ENCODE measurements at regions of chr4 and their contacts with region 1.

Region 1: GRCh38 chr4:108109997-108110416 is 58.7 kb downstream of the LEF1 start:
- DNase-seq: no peak
- ATAC-seq: no peak
- H3K4me3 ChIP-seq: peak overlapping the region in 1 of 2 experiments; percentile 7
- H3K4me3 Mint-ChIP-seq: peak overlapping the region; percentile 61
- H3K27ac ChIP-seq: peak overlapping the region; percentile 6 to 19
- H3K27ac Mint-ChIP-seq: peak overlapping the region; percentile 98
- H3K4me1 ChIP-seq: peaks cover 98% of the 10 kb centered on the region
- H3K4me1 Mint-ChIP-seq: peaks cover 86% of the 10 kb centered on the region
- H3K27me3 ChIP-seq: no peaks in the 10 kb centered on the region
- H3K27me3 Mint-ChIP-seq: no peaks in the 10 kb centered on the region
- CTCF ChIP-seq: no peak

Region 2: GRCh38 chr4:108072300-108072699 is 37.7 kb before region 1 on chr4:
- CTCF ChIA-PET with region 1: interaction called, 5 read pairs
- POLR2A ChIA-PET with region 1: interaction called, 4 read pairs
- intact Hi-C with region 1: loop called (anchors 5 kb)
- DNase-seq: peak; percentile 37 to 93 (median 77)
- ATAC-seq: peak; percentile 87
- H3K4me3 ChIP-seq: peak overlapping the region in 1 of 2 experiments; percentile 20
- H3K4me3 Mint-ChIP-seq: peak overlapping the region; percentile 60
- H3K27ac ChIP-seq: peak overlapping the region; percentile 67 to 76
- H3K27ac Mint-ChIP-seq: peak overlapping the region; percentile 97
- H3K4me1 ChIP-seq: peaks cover 58% of the 10 kb centered on the region
- H3K4me1 Mint-ChIP-seq: peaks cover 74% of the 10 kb centered on the region
- H3K27me3 ChIP-seq: no peaks in the 10 kb centered on the region
- H3K27me3 Mint-ChIP-seq: no peaks in the 10 kb centered on the region
- CTCF ChIP-seq: no peak

Region 3: GRCh38 chr4:108094923-108095482 is 15.0 kb before region 1 on chr4:
- CTCF ChIA-PET with region 1: interaction called, 16 read pairs
- POLR2A ChIA-PET with region 1: interaction called, 20 read pairs
- intact Hi-C with region 1: loop called in 1 of 2 experiments (anchors 1 kb)
- DNase-seq: peak in 2 of 9 experiments; percentile 25 to 56
- ATAC-seq: peak; percentile 47
- H3K4me3 ChIP-seq: no peak overlapping the region
- H3K4me3 Mint-ChIP-seq: peak overlapping the region; percentile 50
- H3K27ac ChIP-seq: peak overlapping the region in 1 of 2 experiments; percentile 7
- H3K27ac Mint-ChIP-seq: peak overlapping the region; percentile 96
- H3K4me1 ChIP-seq: peaks cover 86% of the 10 kb centered on the region
- H3K4me1 Mint-ChIP-seq: peaks cover 83% of the 10 kb centered on the region
- H3K27me3 ChIP-seq: no peaks in the 10 kb centered on the region
- H3K27me3 Mint-ChIP-seq: no peaks in the 10 kb centered on the region
- CTCF ChIP-seq: peak; percentile 35

Region 4: GRCh38 chr4:108141213-108141950 is 31.4 kb after region 1 on chr4:
- CTCF ChIA-PET with region 1: interaction called, 4 read pairs
- POLR2A ChIA-PET with region 1: interaction called, 19 read pairs
- intact Hi-C with region 1: loop called (anchors 2 kb)
- DNase-seq: peak in 3 of 9 experiments; percentile 33 to 45 (median 38)
- ATAC-seq: peak; percentile 6
- H3K4me3 ChIP-seq: peak overlapping the region in 1 of 2 experiments; percentile 10
- H3K4me3 Mint-ChIP-seq: peak overlapping the region; percentile 73
- H3K27ac ChIP-seq: peak overlapping the region; percentile 7 to 9
- H3K27ac Mint-ChIP-seq: peak overlapping the region; percentile 94
- H3K4me1 ChIP-seq: peaks cover 99% of the 10 kb centered on the region
- H3K4me1 Mint-ChIP-seq: peaks cover 90% of the 10 kb centered on the region
- H3K27me3 ChIP-seq: no peaks in the 10 kb centered on the region
- H3K27me3 Mint-ChIP-seq: no peaks in the 10 kb centered on the region
- CTCF ChIP-seq: no peak

Region 5: GRCh38 chr4:108166441-108167315 is 56.7 kb after region 1 on chr4:
- CTCF ChIA-PET with region 1: no interaction called
- POLR2A ChIA-PET with region 1: interaction called, 34 read pairs
- intact Hi-C with region 1: loop called (anchors 2 to 5 kb)
- DNase-seq: peak; percentile 16 to 78 (median 58)
- ATAC-seq: peak; percentile 15
- H3K4me3 ChIP-seq: peak overlapping the region; percentile 73 to 78
- H3K4me3 Mint-ChIP-seq: peak overlapping the region; percentile 95
- H3K27ac ChIP-seq: peak overlapping the region; percentile 42 to 59
- H3K27ac Mint-ChIP-seq: peak overlapping the region; percentile 97
- H3K4me1 ChIP-seq: peaks cover 22% of the 10 kb centered on the region
- H3K4me1 Mint-ChIP-seq: peaks cover 47% of the 10 kb centered on the region
- H3K27me3 ChIP-seq: peaks cover 0 to 32% of the 10 kb centered on the region in 2 experiments
- H3K27me3 Mint-ChIP-seq: peaks cover 3% of the 10 kb centered on the region
- CTCF ChIP-seq: no peak

Region 6: GRCh38 chr4:108255203-108255747 is 145.3 kb after region 1 on chr4:
- CTCF ChIA-PET with region 1: no interaction called
- POLR2A ChIA-PET with region 1: no interaction called
- intact Hi-C with region 1: no loop called
- DNase-seq: no peak
- ATAC-seq: no peak
- H3K4me3 ChIP-seq: no peak overlapping the region
- H3K4me3 Mint-ChIP-seq: no peak overlapping the region
- H3K27ac ChIP-seq: no peak overlapping the region
- H3K27ac Mint-ChIP-seq: no peak overlapping the region
- H3K4me1 ChIP-seq: no peaks in the 10 kb centered on the region
- H3K4me1 Mint-ChIP-seq: peaks cover 9% of the 10 kb centered on the region
- H3K27me3 ChIP-seq: no peaks in the 10 kb centered on the region
- H3K27me3 Mint-ChIP-seq: no peaks in the 10 kb centered on the region
- CTCF ChIP-seq: no peak